Left cardiac atrium (tissue), 4 donors: ENCODE measurements at regions of chr4 and their contacts with region 1.

Region 1: GRCh38 chr4:94722748-94723147 is 35.0 kb upstream of the BMPR1B start:
- DNase-seq: no peak
- ATAC-seq: no peak

Region 2: GRCh38 chr4:94332983-94333590 is 389.7 kb before region 1 on chr4:
- intact Hi-C with region 1: loop called in 1 of 2 experiments (anchors 10 kb)
- DNase-seq: no peak
- ATAC-seq: peak in 1 of 2 donors; percentile 54

Region 3: GRCh38 chr4:94757192-94758139 is 34.7 kb after region 1 on chr4 and contains the start of gene BMPR1B:
- intact Hi-C with region 1: no loop called
- DNase-seq: peak; percentile 31
- ATAC-seq: peak; percentile 60 to 74
- total RNA-seq, gene BMPR1B: 0.77 to 2.0 TPM